ENCODE measurements at regions of chr10 and their contacts with region 1.

Region 1: DNA sequence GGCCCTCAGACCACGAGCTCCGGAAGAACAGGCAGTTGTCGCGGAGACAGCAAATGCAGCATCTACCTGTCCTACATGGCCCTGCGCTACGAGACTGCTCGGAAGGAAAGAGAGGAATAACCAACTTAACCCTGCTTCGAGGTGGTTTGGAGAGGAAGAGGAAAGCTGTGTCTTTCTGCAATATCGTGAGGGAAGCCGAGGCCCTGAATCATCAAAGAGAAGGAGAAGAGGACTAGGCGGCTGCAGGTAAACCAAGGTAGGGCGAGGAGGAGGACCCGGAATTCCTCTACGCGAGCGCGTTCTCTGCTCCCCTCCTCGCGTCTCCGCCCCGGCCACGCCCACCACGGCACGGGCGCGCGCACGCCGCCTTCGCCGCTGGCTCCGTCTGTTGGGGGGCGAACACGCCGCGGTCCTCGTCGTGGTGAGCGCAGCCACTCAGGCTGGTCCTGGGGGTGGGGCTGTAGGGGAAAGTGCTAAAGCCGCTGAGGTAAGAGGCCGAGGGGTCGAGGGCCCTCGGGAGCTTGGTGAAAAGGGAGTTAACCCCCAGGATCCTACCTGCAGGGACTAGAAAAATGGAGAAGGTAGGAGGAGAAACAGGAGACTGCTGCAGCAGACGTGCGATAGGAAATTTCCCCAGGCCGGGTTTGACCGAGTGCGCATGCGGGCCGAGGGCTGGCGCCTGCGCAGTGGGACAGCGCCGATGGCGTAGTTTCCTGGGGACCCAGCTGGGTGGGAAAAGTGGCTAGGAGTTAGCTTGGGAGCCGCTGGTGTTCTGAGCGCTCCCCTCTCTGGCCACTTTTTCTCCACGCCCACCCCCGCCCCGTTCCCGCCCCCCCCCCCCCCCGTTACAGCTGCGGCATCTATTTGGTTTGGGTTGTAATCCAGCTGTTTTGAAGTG is at the starts of genes ANAPC16 and ASCC1:
- DNase-seq: peak; percentile 90 to 97
- H3K4me3 ChIP-seq: peak within 1 kb of the TSS; percentile 64 to 71
- H3K27ac ChIP-seq: peak within 1 kb of the TSS; percentile 96 to 99
- H3K4me1 ChIP-seq: peaks cover 4 to 8% of the 10 kb centered on the region in 2 donors
- H3K27me3 ChIP-seq: no peaks in the 10 kb centered on the region
- CTCF ChIP-seq: peak in 1 of 4 experiments; percentile 32
- POLR2A ChIP-seq: peak; percentile 92 to 97
- total RNA-seq, gene ANAPC16: 83.8 to 144 (median 101) TPM
- total RNA-seq, gene ASCC1: 17.9 to 156 (median 38.4) TPM

Region 2: DNA sequence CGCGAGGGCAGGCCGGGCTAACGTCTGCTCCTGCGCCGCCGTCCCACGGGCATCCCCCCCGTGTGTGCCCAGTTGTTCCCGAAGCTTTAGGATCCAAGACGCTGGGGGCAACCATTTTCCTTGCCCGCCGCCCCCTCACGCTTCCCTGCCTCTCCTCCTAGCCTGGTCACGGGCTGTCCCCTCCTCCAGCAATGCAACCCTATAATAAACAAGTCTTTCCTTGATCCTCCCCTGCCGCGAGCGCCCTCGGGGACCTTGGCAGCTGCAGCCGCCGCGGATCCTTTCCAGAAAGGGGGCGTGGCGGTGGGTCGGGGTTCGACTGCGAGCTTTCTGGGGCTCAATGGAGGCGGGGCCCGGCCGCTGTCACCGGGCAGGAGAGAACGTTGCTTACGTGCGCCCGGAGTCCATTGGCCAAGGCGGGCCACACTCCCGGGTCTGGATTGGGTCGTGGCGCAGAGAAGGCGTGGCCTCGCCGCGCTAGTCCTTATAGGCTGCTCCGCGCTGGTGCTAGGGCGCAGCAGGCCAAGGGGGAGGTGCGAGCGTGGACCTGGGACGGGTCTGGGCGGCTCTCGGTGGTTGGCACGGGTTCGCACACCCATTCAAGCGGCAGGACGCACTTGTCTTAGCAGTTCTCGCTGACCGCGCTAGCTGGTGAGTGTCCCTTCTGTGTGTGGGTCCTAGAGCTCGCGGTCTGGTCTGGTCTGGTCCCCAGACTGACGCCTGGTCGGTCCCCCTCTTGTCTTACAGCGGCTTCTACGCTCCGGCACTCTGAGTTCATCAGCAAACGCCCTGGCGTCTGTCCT is 57.7 kb after region 1 on chr10 and contains the start of gene DDIT4:
- intact Hi-C with region 1: loop called (anchors 10 kb)
- DNase-seq: peak; percentile 99
- H3K4me3 ChIP-seq: peak within 1 kb of the TSS; percentile 77 to 97
- H3K27ac ChIP-seq: peak within 1 kb of the TSS; percentile 97 to 100
- H3K4me1 ChIP-seq: peaks cover 5 to 9% of the 10 kb centered on the region in 2 donors
- H3K27me3 ChIP-seq: no peaks in the 10 kb centered on the region
- CTCF ChIP-seq: peak in 3 of 4 experiments; percentile 7 to 40 (median 9)
- POLR2A ChIP-seq: peak; percentile 100
- total RNA-seq, gene DDIT4: 118 to 210 (median 145) TPM

Measured in uterus (tissue), 4 donors.